ENCODE measurements at regions of chr9 and their contacts with region 1.

Region 1: DNA sequence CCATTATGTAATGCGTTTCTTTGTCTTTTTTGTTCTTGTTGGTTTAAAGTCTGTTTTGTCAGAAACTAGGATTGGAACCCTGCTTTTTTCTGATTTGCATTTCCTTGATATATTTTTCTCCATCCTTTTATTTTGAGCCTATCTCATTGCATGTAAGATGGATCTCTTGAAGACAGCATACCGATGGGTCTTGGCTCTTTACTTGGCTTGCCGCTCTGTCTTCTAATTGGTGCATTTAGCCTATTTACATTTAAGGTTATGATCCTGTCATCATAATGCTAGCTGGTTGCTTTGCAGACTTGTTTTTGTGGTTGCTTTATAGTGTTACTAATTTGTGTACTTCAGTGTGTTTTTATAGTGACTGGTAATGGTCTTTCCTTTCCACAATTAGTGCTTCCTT is 13.3 kb upstream of the CDKN2B start:
- DNase-seq: no peak
- ATAC-seq: no peak
- H3K4me3 Mint-ChIP-seq: no peak overlapping the region
- H3K27ac Mint-ChIP-seq: no peak overlapping the region
- H3K4me1 Mint-ChIP-seq: no peaks in the 10 kb centered on the region
- H3K27me3 Mint-ChIP-seq: peaks cover 47% of the 10 kb centered on the region

Region 2: GRCh38 chr9:21883642-21884041 is 138.8 kb before region 1 on chr9:
- CTCF ChIA-PET with region 1: no interaction called
- POLR2A ChIA-PET with region 1: no interaction called
- intact Hi-C with region 1: no loop called
- DNase-seq: no peak
- ATAC-seq: no peak
- H3K4me3 Mint-ChIP-seq: no peak overlapping the region
- H3K27ac Mint-ChIP-seq: no peak overlapping the region
- H3K4me1 Mint-ChIP-seq: no peaks in the 10 kb centered on the region
- H3K27me3 Mint-ChIP-seq: no peaks in the 10 kb centered on the region

Region 3: GRCh38 chr9:21903380-21903965 is 118.9 kb before region 1 on chr9:
- CTCF ChIA-PET with region 1: no interaction called
- POLR2A ChIA-PET with region 1: interaction called, 12 read pairs
- intact Hi-C with region 1: no loop called
- DNase-seq: no peak
- ATAC-seq: no peak
- H3K4me3 Mint-ChIP-seq: no peak overlapping the region
- H3K27ac Mint-ChIP-seq: no peak overlapping the region
- H3K4me1 Mint-ChIP-seq: no peaks in the 10 kb centered on the region
- H3K27me3 Mint-ChIP-seq: no peaks in the 10 kb centered on the region

Region 4: GRCh38 chr9:21996438-21996837 is 26.0 kb before region 1 on chr9:
- CTCF ChIA-PET with region 1: no interaction called
- POLR2A ChIA-PET with region 1: no interaction called
- intact Hi-C with region 1: no loop called
- DNase-seq: no peak
- ATAC-seq: no peak
- H3K4me3 Mint-ChIP-seq: peak overlapping the region; percentile 90
- H3K27ac Mint-ChIP-seq: no peak overlapping the region
- H3K4me1 Mint-ChIP-seq: peaks cover 8% of the 10 kb centered on the region
- H3K27me3 Mint-ChIP-seq: peaks cover 36% of the 10 kb centered on the region

Region 5: GRCh38 chr9:22052376-22052945 is 30.1 kb after region 1 on chr9:
- CTCF ChIA-PET with region 1: no interaction called
- POLR2A ChIA-PET with region 1: no interaction called
- intact Hi-C with region 1: no loop called
- DNase-seq: peak; percentile 57
- ATAC-seq: peak; percentile 96
- H3K4me3 Mint-ChIP-seq: no peak overlapping the region
- H3K27ac Mint-ChIP-seq: no peak overlapping the region
- H3K4me1 Mint-ChIP-seq: peaks cover 30% of the 10 kb centered on the region
- H3K27me3 Mint-ChIP-seq: peaks cover 13% of the 10 kb centered on the region

Measured in activated CD4-positive, alpha-beta T cell treated with anti-CD3 and anti-CD28 coated beads for 36 hours (primary cell).